ENCODE measurements at regions of chr12 and their contacts with region 1.

Region 1: GRCh38 chr12:85575120-85576096 is 260.8 kb downstream of the RASSF9 start:
- H3K4me3 ChIP-seq: no peak overlapping the region
- H3K27ac ChIP-seq: no peak overlapping the region
- H3K4me1 ChIP-seq: no peaks in the 10 kb centered on the region
- CTCF ChIP-seq: peak; percentile 54; the same call in 1 of the 2 replicates

Region 2: DNA sequence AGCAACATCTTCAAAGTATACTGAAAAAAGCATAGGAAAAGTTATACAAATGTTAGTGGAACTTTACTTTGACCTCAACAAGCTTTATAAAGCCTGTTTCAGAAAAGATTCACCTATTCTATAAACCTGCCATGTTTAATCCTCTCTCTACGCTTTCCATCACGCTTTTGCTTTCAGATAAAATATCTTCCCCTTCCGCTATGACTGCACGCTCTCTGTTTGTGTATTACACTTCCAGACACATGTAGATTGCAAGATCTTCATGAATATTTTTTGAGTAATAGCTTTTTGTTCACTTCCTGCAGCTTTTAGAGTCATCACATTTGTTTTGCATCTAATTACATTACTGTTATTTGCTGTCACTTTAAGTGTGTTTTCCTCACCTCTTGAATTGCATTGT is 10.6 kb before region 1 on chr12:
- CTCF ChIA-PET with region 1: interaction called, 10 read pairs
- POLR2A ChIA-PET with region 1: no interaction called
- H3K4me3 ChIP-seq: no peak overlapping the region
- H3K27ac ChIP-seq: no peak overlapping the region
- H3K4me1 ChIP-seq: no peaks in the 10 kb centered on the region
- CTCF ChIP-seq: no peak

Region 3: DNA sequence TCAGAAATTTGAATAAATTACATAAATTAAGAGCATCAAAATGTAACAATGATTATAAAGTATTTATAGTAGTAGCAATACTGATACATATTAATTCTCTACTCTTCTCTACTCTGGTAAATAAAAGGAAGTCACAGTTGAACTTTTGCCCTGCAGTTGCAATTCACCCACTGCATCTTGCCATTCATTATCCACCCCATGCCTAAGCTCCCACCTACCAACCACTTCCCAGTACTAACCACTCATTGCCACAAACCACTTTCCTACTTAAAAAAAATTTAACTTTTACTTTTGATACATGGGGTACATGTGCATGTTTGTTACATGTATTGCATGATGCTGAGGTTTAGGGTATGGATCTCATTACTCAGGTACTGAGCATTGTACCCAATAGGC is 86.8 kb after region 1 on chr12:
- CTCF ChIA-PET with region 1: no interaction called
- POLR2A ChIA-PET with region 1: no interaction called
- H3K4me3 ChIP-seq: no peak overlapping the region
- H3K27ac ChIP-seq: no peak overlapping the region
- H3K4me1 ChIP-seq: no peaks in the 10 kb centered on the region
- CTCF ChIP-seq: no peak

Region 4: DNA sequence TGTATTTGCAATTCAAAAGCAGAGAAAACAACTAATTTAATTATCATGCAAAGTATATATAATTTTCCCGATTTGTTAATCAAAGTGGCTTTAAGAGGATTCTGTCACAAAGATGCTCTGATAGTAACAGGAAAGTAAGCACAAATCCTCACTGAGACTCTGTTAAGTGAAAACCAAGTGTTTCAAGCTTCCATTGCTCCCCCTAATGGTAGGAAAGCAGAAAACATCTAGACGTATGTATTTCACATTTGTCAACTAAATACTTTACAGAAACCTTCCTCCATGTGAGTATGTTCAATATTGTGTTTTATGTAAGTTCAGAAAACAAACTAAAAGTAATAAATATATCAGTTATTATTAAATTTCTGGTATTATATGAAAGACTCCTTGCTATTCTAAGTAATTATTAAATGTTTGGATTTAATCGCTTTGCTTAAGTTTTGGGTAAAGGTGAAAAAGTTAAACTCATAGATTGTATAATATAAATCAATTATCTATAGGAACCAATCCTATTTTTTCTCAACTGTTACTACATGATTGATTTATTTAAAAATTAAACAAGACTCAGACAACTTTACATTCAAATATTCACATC is 297.2 kb after region 1 on chr12:
- CTCF ChIA-PET with region 1: interaction called, 70 read pairs
- POLR2A ChIA-PET with region 1: no interaction called
- H3K4me3 ChIP-seq: no peak overlapping the region
- H3K27ac ChIP-seq: no peak overlapping the region
- H3K4me1 ChIP-seq: no peaks in the 10 kb centered on the region
- CTCF ChIP-seq: peak; percentile 23; the same call in 1 of the 2 replicates

Measured in HEK293 (cell line).